ENCODE measurements at regions of chr16 and their contacts with region 1.

Region 1: GRCh38 chr16:85554112-85554813 is 58.9 kb upstream of the GSE1 start:
- DNase-seq: peak; percentile 47 to 96 (median 70)
- ATAC-seq: peak; percentile 58
- H3K4me3 ChIP-seq: peak overlapping the region; percentile 92
- H3K27ac ChIP-seq: peak overlapping the region; percentile 97
- H3K4me1 ChIP-seq: peaks cover 21 to 47% of the 10 kb centered on the region in 2 experiments
- H3K27me3 ChIP-seq: no peaks in the 10 kb centered on the region
- CTCF ChIP-seq: no peak
- EP300 ChIP-seq: peak; percentile 97
- POLR2A ChIP-seq: peak; percentile 88
- RAD21 ChIP-seq: peak; percentile 19 to 36; a peak in 3 of 4 replicates

Region 2: GRCh38 chr16:85420501-85421337 is 133.5 kb before region 1 on chr16:
- CTCF ChIA-PET with region 1: interaction called, 11 read pairs
- POLR2A ChIA-PET with region 1: interaction called, 4 read pairs
- in situ Hi-C with region 1: no loop called
- intact Hi-C with region 1: no loop called
- DNase-seq: peak; percentile 92 to 94 (median 92)
- ATAC-seq: peak; percentile 83
- H3K4me3 ChIP-seq: no peak overlapping the region
- H3K27ac ChIP-seq: no peak overlapping the region; the same call in 2 of the 3 replicates
- H3K4me1 ChIP-seq: peaks cover 23 to 87% of the 10 kb centered on the region in 2 experiments
- H3K27me3 ChIP-seq: no peaks in the 10 kb centered on the region
- CTCF ChIP-seq: peak; percentile 100
- EP300 ChIP-seq: no peak
- POLR2A ChIP-seq: no peak
- RAD21 ChIP-seq: peak; percentile 98 to 99

Region 3: DNA sequence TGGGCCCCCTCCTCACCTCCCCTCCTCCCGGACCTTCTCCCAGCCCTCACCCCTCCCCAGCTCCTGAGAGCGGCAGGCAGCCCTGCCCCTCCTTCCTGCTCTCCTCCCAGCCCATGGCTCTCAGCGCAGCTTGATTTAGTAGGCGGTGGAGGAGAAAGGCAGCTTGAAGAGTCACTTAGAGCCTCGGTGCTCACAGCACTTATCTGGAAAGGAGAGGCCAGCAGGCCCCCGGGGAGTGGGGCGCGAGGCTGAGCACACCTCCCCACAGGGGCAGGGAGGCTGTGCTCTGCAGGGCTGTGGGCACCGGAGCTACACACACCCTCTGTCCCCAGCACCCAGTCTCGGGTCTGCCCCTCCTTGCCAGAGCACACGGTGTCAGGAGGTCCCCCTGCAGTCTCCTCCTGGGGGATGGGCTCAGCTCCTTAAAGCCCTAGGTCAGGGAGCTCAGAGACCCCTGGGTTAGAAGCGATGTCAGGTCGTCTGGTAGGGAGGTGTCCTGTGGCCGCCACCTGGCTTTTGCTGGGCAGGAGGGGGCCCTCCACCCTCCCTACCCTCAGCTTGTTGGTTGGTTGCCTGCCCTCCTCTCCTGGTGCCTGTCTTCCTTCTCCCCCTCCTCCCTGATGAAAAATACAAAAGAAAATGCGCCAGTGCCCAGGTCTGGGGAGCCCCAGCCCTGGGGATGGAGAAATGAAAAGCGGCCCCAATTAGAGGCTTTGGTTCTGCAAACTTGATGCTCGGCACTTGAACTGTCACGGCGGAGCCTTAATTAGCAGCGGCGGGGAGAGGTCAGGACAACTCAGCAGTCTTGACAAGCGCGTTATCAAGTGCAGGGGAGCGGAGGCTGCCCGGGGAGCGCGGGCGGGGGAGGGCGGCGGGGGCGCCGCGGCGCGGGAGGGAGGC is 92.2 kb before region 1 on chr16:
- CTCF ChIA-PET with region 1: no interaction called
- POLR2A ChIA-PET with region 1: interaction called, 13 read pairs
- in situ Hi-C with region 1: no loop called
- intact Hi-C with region 1: loop called (anchors 5 kb)
- DNase-seq: peak; percentile 95 to 97 (median 96)
- ATAC-seq: peak; percentile 88
- H3K4me3 ChIP-seq: peak overlapping the region; percentile 34
- H3K27ac ChIP-seq: peak overlapping the region; percentile 78
- H3K4me1 ChIP-seq: peaks cover 45 to 85% of the 10 kb centered on the region in 2 experiments
- H3K27me3 ChIP-seq: no peaks in the 10 kb centered on the region
- CTCF ChIP-seq: peak in 1 of 3 experiments; percentile 6; a peak in 1 of 6 replicates
- EP300 ChIP-seq: peak; percentile 67; the same call in 1 of the 2 replicates
- POLR2A ChIP-seq: no peak; the same call in 1 of the 2 replicates
- RAD21 ChIP-seq: no peak; a peak in 1 of 4 replicates

Region 4: DNA sequence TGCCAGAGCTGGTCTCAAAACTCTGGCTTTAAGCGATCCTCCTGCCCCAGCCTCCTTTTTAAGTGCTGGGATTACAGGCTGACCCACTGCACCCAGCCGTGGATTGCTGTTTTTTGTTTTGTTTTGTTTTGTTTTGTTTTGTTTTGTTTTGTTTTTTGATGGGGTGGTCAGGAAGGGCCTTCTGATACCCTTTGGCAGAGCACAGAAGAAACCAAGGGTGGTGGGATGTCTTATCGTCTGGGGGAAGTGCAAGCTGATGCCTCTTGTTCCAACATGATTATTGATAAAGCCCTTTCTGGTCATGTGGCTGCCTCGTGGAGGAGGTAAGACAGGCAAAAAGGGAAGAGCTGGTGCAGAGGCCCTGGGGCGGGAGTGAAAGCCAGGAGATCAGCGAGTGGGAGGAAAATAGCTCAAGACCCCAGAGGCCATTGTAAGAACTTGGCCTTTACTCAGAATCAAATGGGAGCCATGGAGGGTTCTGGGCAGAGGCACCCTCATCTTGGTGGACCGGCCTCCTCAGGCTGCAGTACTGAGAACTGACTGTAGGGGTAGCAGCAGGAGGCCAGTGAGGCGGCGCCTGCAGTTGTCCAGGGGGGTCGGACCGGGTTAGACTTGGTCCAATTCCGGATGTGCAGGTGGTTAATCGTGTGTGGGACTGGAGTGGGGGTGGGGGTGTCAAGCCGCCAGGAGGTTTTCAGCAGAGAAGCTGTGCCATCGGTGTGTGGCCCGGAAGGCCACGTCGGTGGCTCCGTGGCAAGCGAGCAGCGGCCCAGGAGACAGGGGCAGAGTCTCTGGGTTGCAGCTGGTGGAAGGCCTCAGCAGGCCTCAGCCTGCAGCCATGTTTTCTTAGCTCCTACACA is 25.5 kb before region 1 on chr16:
- CTCF ChIA-PET with region 1: no interaction called
- POLR2A ChIA-PET with region 1: interaction called, 72 read pairs
- in situ Hi-C with region 1: no loop called
- intact Hi-C with region 1: no loop called
- DNase-seq: peak; percentile 83 to 88 (median 86)
- ATAC-seq: peak; percentile 83
- H3K4me3 ChIP-seq: no peak overlapping the region
- H3K27ac ChIP-seq: peak overlapping the region; percentile 53
- H3K4me1 ChIP-seq: peaks cover 55 to 88% of the 10 kb centered on the region in 2 experiments
- H3K27me3 ChIP-seq: no peaks in the 10 kb centered on the region
- CTCF ChIP-seq: peak; percentile 73 to 92 (median 83)
- EP300 ChIP-seq: peak; percentile 24; the same call in 1 of the 2 replicates
- POLR2A ChIP-seq: no peak
- RAD21 ChIP-seq: peak; percentile 66 to 76

Region 5: DNA sequence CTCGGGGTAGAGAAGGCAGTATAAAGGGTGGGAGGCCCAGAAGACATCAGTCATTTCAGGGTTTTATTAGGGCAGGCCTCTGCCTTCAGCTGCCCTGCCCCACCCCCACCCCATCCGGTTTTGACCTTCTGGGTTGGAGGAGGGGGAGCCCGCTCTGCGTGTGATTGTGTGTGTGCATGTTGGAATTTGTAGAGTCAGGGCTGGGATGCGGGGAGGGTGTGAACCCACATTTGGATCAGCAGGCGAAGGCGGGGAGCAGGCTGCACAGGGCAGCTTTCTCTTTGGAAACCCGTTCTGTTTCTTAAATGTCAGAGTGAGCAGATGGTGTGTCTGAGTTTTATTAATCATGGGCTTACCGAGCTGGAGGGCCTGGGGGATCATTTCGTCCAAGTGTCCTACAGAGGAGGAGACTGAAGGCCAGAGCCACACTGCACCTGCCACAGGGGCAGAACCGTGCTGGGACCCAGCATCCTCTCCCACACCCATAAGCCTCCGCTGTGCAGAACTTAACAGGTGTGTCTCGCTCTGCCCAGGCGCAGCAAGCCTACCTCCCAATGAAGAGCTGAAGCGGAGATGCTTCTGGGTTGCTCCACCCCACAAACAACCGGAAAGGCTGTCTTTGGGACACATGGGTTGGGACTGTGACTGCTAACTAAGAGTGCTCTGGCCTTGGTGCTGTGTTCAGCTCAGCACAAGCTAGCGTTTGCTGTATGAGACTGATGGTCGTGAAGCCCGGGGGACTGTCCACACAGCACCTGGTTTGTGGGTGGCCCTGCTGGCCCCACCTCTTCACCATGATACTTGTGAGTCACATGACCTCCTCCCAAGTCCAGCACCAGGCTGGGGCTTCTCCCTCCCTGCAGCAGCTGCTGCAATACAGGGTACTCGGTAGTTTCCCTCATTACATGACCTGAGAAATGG is 12.0 kb before region 1 on chr16:
- CTCF ChIA-PET with region 1: no interaction called
- POLR2A ChIA-PET with region 1: interaction called, 122 read pairs
- in situ Hi-C with region 1: no loop called
- intact Hi-C with region 1: no loop called
- DNase-seq: peak; percentile 71 to 78 (median 74)
- ATAC-seq: peak; percentile 79
- H3K4me3 ChIP-seq: no peak overlapping the region
- H3K27ac ChIP-seq: peak overlapping the region; percentile 27; the same call in 2 of the 3 replicates
- H3K4me1 ChIP-seq: peaks cover 42 to 73% of the 10 kb centered on the region in 2 experiments
- H3K27me3 ChIP-seq: no peaks in the 10 kb centered on the region; a peak in 1 of 5 replicates
- CTCF ChIP-seq: no peak
- EP300 ChIP-seq: peak; percentile 20; the same call in 1 of the 2 replicates
- POLR2A ChIP-seq: no peak
- RAD21 ChIP-seq: no peak

Region 6: GRCh38 chr16:85569615-85570212 is 15.5 kb after region 1 on chr16:
- CTCF ChIA-PET with region 1: interaction called, 3 read pairs
- POLR2A ChIA-PET with region 1: interaction called, 57 read pairs
- in situ Hi-C with region 1: no loop called
- intact Hi-C with region 1: loop called (anchors 1 kb)
- DNase-seq: peak; percentile 62 to 96 (median 79)
- ATAC-seq: peak; percentile 60
- H3K4me3 ChIP-seq: peak overlapping the region; percentile 40
- H3K27ac ChIP-seq: peak overlapping the region; percentile 97
- H3K4me1 ChIP-seq: peaks cover 90 to 98% of the 10 kb centered on the region in 2 experiments
- H3K27me3 ChIP-seq: no peaks in the 10 kb centered on the region; a peak in 1 of 5 replicates
- CTCF ChIP-seq: no peak
- EP300 ChIP-seq: peak; percentile 71; the same call in 1 of the 2 replicates
- POLR2A ChIP-seq: peak; percentile 84
- RAD21 ChIP-seq: no peak

Region 7: GRCh38 chr16:85615852-85616606 is 61.8 kb after region 1 on chr16:
- CTCF ChIA-PET with region 1: interaction called, 10 read pairs
- POLR2A ChIA-PET with region 1: interaction called, 15 read pairs
- in situ Hi-C with region 1: no loop called
- intact Hi-C with region 1: no loop called
- DNase-seq: peak in 3 of 4 experiments; percentile 48 to 93 (median 81)
- ATAC-seq: peak; percentile 48
- H3K4me3 ChIP-seq: peak overlapping the region; percentile 85
- H3K27ac ChIP-seq: peak overlapping the region; percentile 99
- H3K4me1 ChIP-seq: peaks cover 55 to 89% of the 10 kb centered on the region in 2 experiments
- H3K27me3 ChIP-seq: no peaks in the 10 kb centered on the region
- CTCF ChIP-seq: peak; percentile 90 to 98 (median 90)
- EP300 ChIP-seq: 0 out of 2 replicates have a peak, but pooled peaks have one; percentile 9
- POLR2A ChIP-seq: no peak; the same call in none of the 2 replicates
- RAD21 ChIP-seq: peak; percentile 43 to 70